ENCODE measurements at regions of chr2 and their contacts with region 1.

Region 1: DNA sequence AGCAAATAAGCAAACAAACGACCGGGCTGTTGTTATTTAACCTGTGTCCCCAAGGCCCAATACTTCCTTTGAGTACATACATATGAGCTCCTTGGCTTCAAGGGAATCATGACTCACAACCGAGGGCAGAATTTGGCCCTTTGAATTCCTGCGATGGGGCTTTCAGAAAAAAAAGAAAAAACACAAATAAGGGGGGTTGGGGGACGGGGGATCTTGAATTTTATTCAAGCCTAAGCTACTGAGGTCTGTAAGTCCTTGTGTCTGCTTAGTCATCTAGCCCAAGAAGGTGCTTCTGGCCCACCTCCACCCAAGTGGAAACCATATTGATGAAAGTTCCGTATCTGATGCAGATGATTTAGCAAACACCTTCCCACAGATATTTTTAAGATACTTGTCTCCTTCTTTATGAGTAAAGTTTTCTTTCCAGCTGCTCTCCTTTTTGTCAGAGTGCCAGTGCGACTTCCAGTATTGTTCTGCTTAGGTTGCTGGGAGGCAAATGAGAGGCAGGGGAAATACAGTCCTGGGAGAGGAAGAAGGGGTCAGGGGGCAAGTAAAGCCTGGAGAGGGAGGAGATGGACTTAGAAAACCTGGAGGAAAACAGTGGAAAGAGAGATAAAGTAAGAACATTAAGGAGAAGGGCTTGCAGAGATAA is 169.6 kb downstream of the ZEB2 start:
- DNase-seq: no peak
- H3K4me3 ChIP-seq: no peak overlapping the region
- H3K27ac ChIP-seq: no peak overlapping the region
- H3K4me1 ChIP-seq: no peaks in the 10 kb centered on the region
- H3K27me3 ChIP-seq: no peaks in the 10 kb centered on the region
- CTCF ChIP-seq: no peak

Region 2: GRCh38 chr2:144377914-144378313 is 27.6 kb after region 1 on chr2:
- CTCF ChIA-PET with region 1: no interaction called
- POLR2A ChIA-PET with region 1: no interaction called
- intact Hi-C with region 1: loop called (anchors 1 kb)
- DNase-seq: no peak
- H3K4me3 ChIP-seq: no peak overlapping the region
- H3K27ac ChIP-seq: no peak overlapping the region
- H3K4me1 ChIP-seq: peaks cover 16% of the 10 kb centered on the region
- H3K27me3 ChIP-seq: no peaks in the 10 kb centered on the region
- CTCF ChIP-seq: no peak

Region 3: GRCh38 chr2:144539289-144539782 is 189.1 kb after region 1 on chr2:
- CTCF ChIA-PET with region 1: no interaction called
- POLR2A ChIA-PET with region 1: no interaction called
- intact Hi-C with region 1: no loop called
- DNase-seq: no peak
- H3K4me3 ChIP-seq: no peak overlapping the region
- H3K27ac ChIP-seq: no peak overlapping the region
- H3K4me1 ChIP-seq: no peaks in the 10 kb centered on the region
- H3K27me3 ChIP-seq: no peaks in the 10 kb centered on the region
- CTCF ChIP-seq: no peak

Region 4: GRCh38 chr2:145123606-145124005 is 773.3 kb after region 1 on chr2:
- CTCF ChIA-PET with region 1: no interaction called
- POLR2A ChIA-PET with region 1: interaction called, 10 read pairs
- intact Hi-C with region 1: no loop called
- DNase-seq: no peak
- H3K4me3 ChIP-seq: no peak overlapping the region
- H3K27ac ChIP-seq: no peak overlapping the region
- H3K4me1 ChIP-seq: no peaks in the 10 kb centered on the region
- H3K27me3 ChIP-seq: no peaks in the 10 kb centered on the region
- CTCF ChIP-seq: no peak

Region 5: DNA sequence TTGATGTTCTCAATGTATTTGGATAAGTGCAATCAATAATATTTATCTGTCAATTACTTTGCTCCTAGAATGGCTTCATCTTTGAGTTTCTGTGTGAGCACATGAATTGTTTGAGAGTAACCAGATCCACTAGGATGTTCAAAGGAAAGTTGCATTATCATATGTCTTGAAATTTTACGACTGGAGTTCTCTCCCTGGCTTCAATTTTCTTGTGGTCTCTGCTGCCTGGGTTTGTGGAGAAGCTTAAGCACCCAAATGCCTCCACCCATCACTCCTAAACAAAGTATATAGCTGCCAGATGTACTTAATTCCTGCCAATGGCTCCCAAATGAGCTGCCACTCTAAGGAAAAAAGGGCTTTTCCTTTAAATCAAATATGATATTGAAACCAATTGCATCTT is 1319.0 kb after region 1 on chr2:
- CTCF ChIA-PET with region 1: no interaction called
- POLR2A ChIA-PET with region 1: no interaction called
- intact Hi-C with region 1: no loop called
- DNase-seq: no peak
- H3K4me3 ChIP-seq: no peak overlapping the region
- H3K27ac ChIP-seq: no peak overlapping the region
- H3K4me1 ChIP-seq: no peaks in the 10 kb centered on the region
- H3K27me3 ChIP-seq: no peaks in the 10 kb centered on the region
- CTCF ChIP-seq: no peak